Calu3 (cell line): ENCODE measurements at regions of chr1 and their contacts with region 1.

Region 1: GRCh38 chr1:213131851-213132655 is 81.0 kb downstream of the RPS6KC1 start:
- DNase-seq: no peak
- H3K4me3 Mint-ChIP-seq: no peak overlapping the region
- H3K27ac Mint-ChIP-seq: no peak overlapping the region
- H3K4me1 Mint-ChIP-seq: peaks cover 52% of the 10 kb centered on the region
- H3K27me3 Mint-ChIP-seq: no peaks in the 10 kb centered on the region
- CTCF ChIP-seq: no peak

Region 2: DNA sequence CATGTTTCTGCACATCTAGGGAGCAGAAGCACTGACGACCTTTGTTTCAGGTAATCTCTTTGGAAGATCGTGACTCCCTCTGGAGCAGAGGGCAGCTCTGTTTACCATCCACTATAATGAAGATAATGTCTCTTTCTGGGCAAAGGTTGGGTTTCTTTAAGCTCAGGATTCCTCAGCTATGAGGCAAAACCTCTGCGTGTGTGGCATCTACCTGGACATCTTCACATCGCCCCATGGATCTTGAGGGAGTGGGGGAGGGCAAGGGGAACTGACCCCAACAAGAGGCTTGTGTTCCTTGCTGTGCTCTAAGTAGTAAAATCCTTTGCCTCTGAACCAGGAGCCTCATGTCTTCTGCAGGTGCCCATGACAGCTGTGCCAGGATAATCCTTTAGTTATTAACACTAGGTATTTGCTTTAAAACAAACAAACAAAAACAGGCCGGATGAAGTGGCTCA is 304.2 kb before region 1 on chr1:
- CTCF ChIA-PET with region 1: no interaction called
- intact Hi-C with region 1: no loop called
- DNase-seq: no peak
- H3K4me3 Mint-ChIP-seq: no peak overlapping the region
- H3K27ac Mint-ChIP-seq: no peak overlapping the region
- H3K4me1 Mint-ChIP-seq: peaks cover 2% of the 10 kb centered on the region
- H3K27me3 Mint-ChIP-seq: no peaks in the 10 kb centered on the region
- CTCF ChIP-seq: no peak

Region 3: GRCh38 chr1:213179784-213180183 is 47.7 kb after region 1 on chr1:
- CTCF ChIA-PET with region 1: no interaction called
- intact Hi-C with region 1: loop called (anchors 2 kb)
- DNase-seq: no peak
- H3K4me3 Mint-ChIP-seq: no peak overlapping the region
- H3K27ac Mint-ChIP-seq: no peak overlapping the region
- H3K4me1 Mint-ChIP-seq: peaks cover 11% of the 10 kb centered on the region
- H3K27me3 Mint-ChIP-seq: no peaks in the 10 kb centered on the region
- CTCF ChIP-seq: no peak